ENCODE measurements at regions of chr18 and their contacts with region 1.

Region 1: DNA sequence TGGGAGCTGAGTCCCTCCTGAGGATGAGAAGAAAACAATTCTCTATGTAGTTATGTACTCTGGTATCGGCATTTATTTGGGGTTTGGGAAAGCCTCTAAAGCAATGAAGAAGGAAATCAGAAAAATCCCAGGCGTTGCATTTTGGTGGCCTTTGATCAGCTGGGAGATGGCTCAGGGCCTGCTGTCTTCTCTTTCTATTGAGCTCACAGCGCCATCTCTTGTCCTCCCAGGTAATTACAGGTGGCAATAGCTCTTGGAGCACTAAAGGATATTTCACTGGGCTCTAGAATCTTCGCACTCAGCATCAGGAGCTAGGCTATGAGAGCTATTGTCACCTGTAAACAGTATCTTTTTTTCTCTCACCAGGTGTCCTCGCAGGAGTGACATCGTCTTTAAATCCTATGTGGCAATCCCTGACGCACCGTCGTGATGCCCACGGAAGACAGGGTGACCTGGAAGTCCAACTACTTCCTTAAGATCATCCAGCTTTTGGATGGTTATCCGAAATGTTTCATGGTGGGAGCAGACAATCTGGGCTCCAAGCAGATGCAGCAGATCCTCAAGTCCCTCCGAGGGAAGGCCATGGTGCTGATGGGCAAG is 76.1 kb upstream of the PMAIP1 start:
- DNase-seq: peak; percentile 68
- H3K4me3 ChIP-seq: no peak overlapping the region
- H3K27ac ChIP-seq: no peak overlapping the region
- H3K27me3 ChIP-seq: no peaks in the 10 kb centered on the region
- CTCF ChIP-seq: peak; percentile 92

Region 2: GRCh38 chr18:59429608-59430007 is 394.1 kb before region 1 on chr18:
- CTCF ChIA-PET with region 1: interaction called, 12 read pairs
- POLR2A ChIA-PET with region 1: no interaction called
- DNase-seq: no peak
- H3K4me3 ChIP-seq: no peak overlapping the region
- H3K27ac ChIP-seq: no peak overlapping the region
- H3K27me3 ChIP-seq: no peaks in the 10 kb centered on the region
- CTCF ChIP-seq: no peak

Region 3: GRCh38 chr18:59516356-59517155 is 307.1 kb before region 1 on chr18:
- CTCF ChIA-PET with region 1: interaction called, 8 read pairs
- POLR2A ChIA-PET with region 1: interaction called, 14 read pairs
- DNase-seq: peak; percentile 52
- H3K4me3 ChIP-seq: no peak overlapping the region
- H3K27ac ChIP-seq: no peak overlapping the region
- H3K27me3 ChIP-seq: no peaks in the 10 kb centered on the region
- CTCF ChIP-seq: no peak

Region 4: DNA sequence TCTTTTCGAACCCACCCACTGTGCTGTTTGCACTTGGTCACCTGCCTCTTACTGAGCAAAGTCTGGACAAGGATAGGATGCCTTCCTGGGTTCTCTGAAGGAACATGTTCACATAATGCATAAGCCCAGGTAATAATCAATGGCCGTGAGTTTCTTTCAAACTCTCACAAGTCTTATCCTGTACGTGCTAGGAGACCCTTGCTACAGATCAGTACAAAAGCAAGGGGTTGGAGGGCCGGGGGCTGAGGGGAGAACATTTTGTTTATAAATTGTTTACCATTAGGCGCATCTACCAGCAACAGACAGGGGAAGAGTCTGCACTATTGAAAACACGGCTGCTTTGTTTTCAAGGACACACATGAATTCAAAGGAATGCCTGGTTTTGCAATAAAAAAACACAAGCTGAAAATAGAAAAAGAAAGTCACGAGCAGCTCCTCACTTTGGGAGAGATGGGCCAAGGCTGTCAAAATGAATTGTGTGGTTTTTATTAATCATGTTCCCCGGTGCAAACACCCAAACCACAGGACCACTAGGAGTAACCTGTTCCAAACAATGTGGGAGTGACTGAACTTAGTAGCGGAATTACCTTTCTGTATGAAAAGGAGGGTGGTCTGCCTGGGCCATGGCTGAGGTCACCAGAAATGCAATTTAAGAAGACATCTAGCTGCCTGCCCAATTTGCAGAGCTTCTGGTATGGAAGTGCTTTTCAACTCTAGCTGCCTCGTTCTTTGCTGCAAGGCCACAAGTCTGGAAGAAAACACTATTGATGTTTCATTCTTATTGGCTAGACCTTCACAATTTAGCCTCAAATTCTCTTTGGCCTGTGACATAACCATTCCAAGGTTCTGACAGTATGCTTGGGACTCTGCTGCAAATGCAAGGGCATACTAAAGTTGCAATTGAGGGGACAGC is 200.0 kb before region 1 on chr18:
- CTCF ChIA-PET with region 1: interaction called, 31 read pairs
- POLR2A ChIA-PET with region 1: no interaction called
- DNase-seq: no peak
- H3K4me3 ChIP-seq: no peak overlapping the region
- H3K27ac ChIP-seq: peak overlapping the region; percentile 49
- H3K27me3 ChIP-seq: no peaks in the 10 kb centered on the region
- CTCF ChIP-seq: no peak

Region 5: GRCh38 chr18:59690996-59691395 is 132.7 kb before region 1 on chr18:
- CTCF ChIA-PET with region 1: interaction called, 108 read pairs
- POLR2A ChIA-PET with region 1: interaction called, 20 read pairs
- DNase-seq: no peak
- H3K4me3 ChIP-seq: no peak overlapping the region
- H3K27ac ChIP-seq: no peak overlapping the region
- H3K27me3 ChIP-seq: no peaks in the 10 kb centered on the region
- CTCF ChIP-seq: no peak

Region 6: GRCh38 chr18:59763541-59764136 is 60.1 kb before region 1 on chr18:
- CTCF ChIA-PET with region 1: interaction called, 15 read pairs
- POLR2A ChIA-PET with region 1: no interaction called
- DNase-seq: no peak
- H3K4me3 ChIP-seq: no peak overlapping the region
- H3K27ac ChIP-seq: no peak overlapping the region
- H3K27me3 ChIP-seq: no peaks in the 10 kb centered on the region
- CTCF ChIP-seq: no peak; the same call in 1 of the 2 replicates

Region 7: DNA sequence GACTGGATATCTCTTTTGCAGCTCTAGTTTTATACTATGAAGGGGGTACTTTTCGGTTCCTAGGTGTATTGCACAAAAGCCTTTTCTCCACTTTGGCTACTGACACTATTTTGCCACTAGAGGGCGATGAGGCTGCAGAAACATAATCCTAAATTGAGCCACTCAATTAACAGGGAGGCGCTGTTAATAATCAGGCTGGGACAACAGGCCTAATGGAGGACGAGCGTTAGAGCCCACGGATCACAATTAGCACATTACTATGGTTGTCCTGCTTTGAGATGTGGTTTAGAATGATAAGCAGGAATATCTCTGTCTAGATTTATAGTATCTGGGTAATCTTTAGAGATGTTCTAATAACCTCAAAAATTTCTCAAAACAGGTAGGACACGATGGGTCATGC is 13.9 kb after region 1 on chr18:
- CTCF ChIA-PET with region 1: interaction called, 17 read pairs
- POLR2A ChIA-PET with region 1: no interaction called
- DNase-seq: no peak
- H3K4me3 ChIP-seq: no peak overlapping the region
- H3K27ac ChIP-seq: no peak overlapping the region
- H3K27me3 ChIP-seq: no peaks in the 10 kb centered on the region
- CTCF ChIP-seq: peak; percentile 94